H1 (cell line): ENCODE measurements at regions of chr10 and their contacts with region 1.

Region 1: GRCh38 chr10:79195091-79195923 is 126.5 kb downstream of the ZMIZ1 start:
- DNase-seq: peak; percentile 79 to 89
- H3K4me3 ChIP-seq: no peak overlapping the region
- H3K27ac ChIP-seq: no peak overlapping the region; the same call in 1 of the 2 replicates
- H3K4me1 ChIP-seq: peaks cover 0 to 14% (median 5%) of the 10 kb centered on the region in 4 experiments; a peak in 5 of 7 replicates
- H3K27me3 ChIP-seq: no peaks in the 10 kb centered on the region
- CTCF ChIP-seq: peak; percentile 92 to 98 (median 95)
- EP300 ChIP-seq: no peak
- POLR2A ChIP-seq: no peak
- RAD21 ChIP-seq: peak; percentile 98

Region 2: DNA sequence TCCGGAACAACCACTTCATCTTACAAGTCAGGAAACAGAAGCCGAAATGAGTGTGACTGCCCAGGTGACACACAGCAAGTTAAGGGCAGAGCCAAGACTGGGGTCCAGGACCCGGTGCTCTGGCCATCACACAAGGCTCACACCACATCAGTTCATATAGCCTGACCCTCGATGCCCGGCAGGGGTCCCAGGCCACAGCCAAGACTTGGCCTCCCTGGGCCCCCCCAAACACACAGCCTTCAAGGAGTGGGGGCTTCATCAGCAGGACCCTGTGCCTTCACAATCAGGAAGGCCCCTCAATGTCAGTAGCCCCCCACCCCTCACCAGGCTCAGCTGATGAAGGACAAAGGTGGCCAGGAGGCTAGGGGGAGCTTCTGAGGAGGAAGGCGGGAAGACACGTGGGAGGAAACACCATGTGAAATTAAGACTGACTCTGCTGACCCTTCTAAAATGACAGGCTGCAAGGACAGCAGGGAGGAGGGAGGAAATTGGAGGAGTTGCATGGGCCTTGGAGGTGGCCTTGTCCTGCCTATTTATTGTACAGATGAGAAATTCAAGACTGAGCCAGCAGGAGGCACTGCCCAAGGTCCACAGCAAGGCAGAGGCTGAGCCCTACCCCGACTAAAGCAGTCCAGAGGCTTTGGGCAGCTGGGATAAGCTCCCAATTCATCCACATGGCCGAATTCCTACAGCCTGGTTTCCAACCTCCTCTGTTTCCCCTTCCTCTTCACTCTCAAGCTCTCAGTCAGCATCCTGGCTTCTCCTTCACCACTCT is 342.7 kb before region 1 on chr10:
- CTCF ChIA-PET with region 1: interaction called, 28 read pairs
- POLR2A ChIA-PET with region 1: no interaction called
- DNase-seq: peak in 1 of 2 experiments; percentile 68
- H3K4me3 ChIP-seq: no peak overlapping the region
- H3K27ac ChIP-seq: no peak overlapping the region
- H3K4me1 ChIP-seq: peaks cover 0 to 4% (median 2%) of the 10 kb centered on the region in 4 experiments; a peak in 5 of 7 replicates
- H3K27me3 ChIP-seq: 0 out of 7 replicates have a peak, but pooled peaks cover 0 to 2% (median 0%) of the 10 kb centered on the region in 4 experiments
- CTCF ChIP-seq: peak; percentile 59 to 75 (median 67)
- EP300 ChIP-seq: no peak
- POLR2A ChIP-seq: no peak
- RAD21 ChIP-seq: peak; percentile 74 to 78

Region 3: GRCh38 chr10:79052291-79053080 is 142.8 kb before region 1 on chr10:
- CTCF ChIA-PET with region 1: interaction called, 10 read pairs
- POLR2A ChIA-PET with region 1: no interaction called
- DNase-seq: no peak
- H3K4me3 ChIP-seq: no peak overlapping the region
- H3K27ac ChIP-seq: no peak overlapping the region
- H3K4me1 ChIP-seq: peaks cover 0 to 35% (median 19%) of the 10 kb centered on the region in 4 experiments; a peak in 6 of 7 replicates
- H3K27me3 ChIP-seq: peaks cover 0 to 5% (median 0%) of the 10 kb centered on the region in 4 experiments; a peak in 2 of 7 replicates
- CTCF ChIP-seq: peak; percentile 35 to 83 (median 55)
- EP300 ChIP-seq: no peak
- POLR2A ChIP-seq: no peak
- RAD21 ChIP-seq: peak; percentile 51 to 66

Region 4: GRCh38 chr10:79079490-79080355 is 115.6 kb before region 1 on chr10:
- CTCF ChIA-PET with region 1: interaction called, 34 read pairs
- POLR2A ChIA-PET with region 1: interaction called, 4 read pairs
- DNase-seq: no peak
- H3K4me3 ChIP-seq: no peak overlapping the region
- H3K27ac ChIP-seq: no peak overlapping the region; the same call in 1 of the 2 replicates
- H3K4me1 ChIP-seq: peaks cover 10 to 23% (median 16%) of the 10 kb centered on the region in 4 experiments
- H3K27me3 ChIP-seq: no peaks in the 10 kb centered on the region
- CTCF ChIP-seq: no peak
- EP300 ChIP-seq: no peak
- POLR2A ChIP-seq: no peak
- RAD21 ChIP-seq: no peak

Region 5: DNA sequence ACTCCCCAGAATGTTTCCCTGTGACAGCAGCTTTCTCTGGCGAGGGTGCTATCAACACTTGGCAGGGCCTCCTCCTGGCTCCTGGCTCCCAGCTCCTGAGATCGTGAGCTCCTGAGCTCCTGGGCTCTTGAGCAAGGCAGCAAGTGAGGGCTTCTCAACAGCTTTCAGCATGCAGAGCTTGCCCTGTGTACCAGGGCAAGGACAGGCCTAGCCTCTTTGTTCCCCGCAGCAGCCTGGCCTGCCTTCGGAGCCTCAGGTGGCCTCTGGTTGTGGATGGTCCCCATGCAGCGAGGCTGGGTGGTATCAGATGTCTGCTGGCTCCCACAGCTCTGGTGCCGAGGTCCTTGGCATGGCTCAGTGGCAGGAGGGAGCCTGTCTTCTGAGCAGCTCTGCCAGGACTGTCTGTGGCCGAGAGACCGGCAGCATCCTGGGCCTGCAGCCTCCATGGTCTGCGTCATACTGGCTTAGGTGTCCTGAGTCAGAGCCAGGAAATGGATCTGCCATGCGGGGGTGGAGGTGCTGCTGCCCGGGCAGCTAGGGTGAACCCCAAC is 82.4 kb before region 1 on chr10:
- CTCF ChIA-PET with region 1: interaction called, 51 read pairs
- POLR2A ChIA-PET with region 1: no interaction called
- DNase-seq: no peak
- H3K4me3 ChIP-seq: no peak overlapping the region
- H3K27ac ChIP-seq: peak overlapping the region; percentile 35; the same call in 1 of the 2 replicates
- H3K4me1 ChIP-seq: peaks cover 6 to 37% (median 23%) of the 10 kb centered on the region in 4 experiments
- H3K27me3 ChIP-seq: no peaks in the 10 kb centered on the region
- CTCF ChIP-seq: no peak
- EP300 ChIP-seq: no peak
- POLR2A ChIP-seq: no peak
- RAD21 ChIP-seq: no peak

Region 6: DNA sequence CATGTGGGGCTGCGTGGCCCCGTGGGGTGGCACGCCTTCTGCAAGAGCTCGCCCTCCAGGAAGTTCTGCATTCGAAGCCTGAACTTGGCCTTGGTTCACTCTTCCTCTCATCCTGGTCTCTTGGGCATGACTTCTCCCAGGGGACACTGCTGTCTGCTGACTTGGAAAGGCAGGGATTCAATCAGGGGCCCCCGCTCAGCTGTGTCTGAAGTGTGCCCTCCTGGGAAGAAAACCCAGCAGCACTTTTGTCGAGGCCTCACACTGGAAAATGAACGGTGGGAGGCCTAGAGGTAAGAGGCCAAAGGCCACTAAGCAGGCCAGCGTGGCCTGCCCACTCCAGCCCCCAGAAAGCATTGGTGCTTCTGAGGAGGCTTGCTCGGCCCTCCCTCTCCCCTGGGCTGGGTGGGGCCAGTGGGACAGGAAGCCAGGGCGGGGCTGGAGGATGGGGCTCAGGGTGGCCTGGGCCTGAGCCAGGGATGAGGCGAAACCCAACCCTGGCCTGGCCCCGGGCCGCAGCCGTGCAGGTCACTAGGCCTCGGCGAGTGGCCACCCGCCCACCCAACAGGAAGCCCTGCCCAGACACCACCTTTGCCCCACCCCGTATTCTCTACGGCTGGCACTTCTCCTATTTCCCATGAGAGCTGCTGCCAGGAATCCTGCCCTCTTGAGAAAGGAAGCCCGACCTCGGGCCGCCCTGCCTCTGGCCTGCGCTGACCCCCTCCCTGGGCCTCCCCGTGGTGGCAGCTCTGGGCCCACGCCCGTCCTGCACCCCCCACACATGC is 45.5 kb before region 1 on chr10:
- CTCF ChIA-PET with region 1: interaction called, 396 read pairs
- POLR2A ChIA-PET with region 1: no interaction called
- DNase-seq: no peak
- H3K4me3 ChIP-seq: no peak overlapping the region
- H3K27ac ChIP-seq: no peak overlapping the region
- H3K4me1 ChIP-seq: peaks cover 0 to 22% (median 13%) of the 10 kb centered on the region in 4 experiments; a peak in 5 of 7 replicates
- H3K27me3 ChIP-seq: no peaks in the 10 kb centered on the region
- CTCF ChIP-seq: no peak
- EP300 ChIP-seq: no peak
- POLR2A ChIP-seq: no peak
- RAD21 ChIP-seq: no peak